Activated T-helper 1 cell treated with anti-CD3 and anti-CD28 coated beads, Interleukin-12 subunit alpha, Interleukin-12 subunit beta, Interleukin-2, Interleukin-4 antibody, amounts not matched to agents 30 ng/mL and 10 ng/mL and 1 ng/mL, durations not matched to agents 14 hours and 24 hours and 36 hours (primary cell): ENCODE measurements at regions of chr12 and their contacts with region 1.

Region 1: DNA sequence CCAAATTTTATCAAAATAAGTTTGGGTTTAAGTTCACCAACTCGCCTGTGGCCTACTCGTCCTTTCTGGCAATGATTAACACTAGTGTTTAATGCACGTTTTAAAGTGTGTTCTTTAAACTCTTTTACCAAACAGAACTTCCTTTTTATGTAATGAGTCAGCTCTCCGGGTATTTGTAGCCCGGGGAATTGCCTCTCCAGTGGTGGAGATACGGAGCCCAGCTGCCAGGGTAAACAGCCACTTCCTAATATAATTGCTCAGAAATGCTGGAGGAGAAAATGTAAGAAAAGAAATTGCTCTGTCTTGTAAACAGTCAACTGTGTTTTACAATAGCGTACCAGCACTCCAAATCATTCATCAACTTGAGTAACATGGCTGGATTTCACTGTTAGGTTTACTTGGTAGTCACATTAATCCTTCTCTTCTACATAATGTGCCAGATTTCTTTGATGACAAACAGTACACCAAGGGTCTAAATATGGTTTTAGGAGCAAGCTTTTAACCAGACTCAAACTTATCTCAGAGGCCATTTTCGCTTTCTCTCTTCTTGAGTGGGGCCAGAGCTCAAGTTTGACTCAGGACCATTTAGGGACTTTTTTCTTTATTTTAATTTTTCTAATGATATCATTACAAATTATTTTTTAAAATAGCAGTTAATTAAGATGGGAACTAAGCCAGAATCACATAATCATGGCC is 101.2 kb upstream of the SLC38A2 start:
- DNase-seq: no peak
- H3K4me3 Mint-ChIP-seq: peak overlapping the region; percentile 51
- H3K27ac Mint-ChIP-seq: peak overlapping the region; percentile 65
- H3K4me1 Mint-ChIP-seq: peaks cover 42% of the 10 kb centered on the region
- H3K27me3 Mint-ChIP-seq: no peaks in the 10 kb centered on the region

Region 2: DNA sequence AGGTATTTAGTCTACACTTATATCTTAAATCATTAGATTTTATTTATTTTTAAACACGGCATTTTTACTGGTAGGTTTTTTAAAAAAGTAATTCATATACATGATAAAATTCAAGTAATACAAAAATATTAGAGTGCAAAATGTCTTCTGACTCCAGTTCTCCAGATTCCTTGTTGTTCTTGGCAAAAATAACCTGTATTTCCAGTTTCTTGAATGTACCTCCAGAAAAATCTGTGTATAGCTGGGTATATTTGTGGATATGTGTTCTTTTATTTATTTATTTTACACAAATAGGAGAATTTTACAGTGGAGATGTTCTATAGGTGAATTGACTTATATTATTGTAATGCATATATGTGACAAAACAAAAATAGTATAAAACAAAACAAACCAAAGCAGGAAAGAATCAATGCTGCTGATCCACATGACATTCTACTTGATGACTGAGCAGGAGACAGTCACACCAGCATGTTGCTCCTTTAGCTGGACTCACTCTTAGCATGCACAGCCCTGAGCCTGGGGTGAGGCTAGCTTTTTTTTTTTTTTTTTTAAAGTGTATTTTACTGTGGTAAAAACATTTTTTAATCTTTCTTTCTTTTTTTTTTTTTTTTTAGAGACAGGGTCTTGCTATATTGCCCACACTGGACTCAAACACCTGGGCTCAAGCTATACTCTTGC is 59.1 kb before region 1 on chr12:
- intact Hi-C with region 1: no loop called
- DNase-seq: no peak
- H3K4me3 Mint-ChIP-seq: no peak overlapping the region
- H3K27ac Mint-ChIP-seq: no peak overlapping the region
- H3K4me1 Mint-ChIP-seq: no peaks in the 10 kb centered on the region
- H3K27me3 Mint-ChIP-seq: no peaks in the 10 kb centered on the region

Region 3: GRCh38 chr12:46503637-46504175 is 29.9 kb after region 1 on chr12:
- intact Hi-C with region 1: loop called (anchors 1 kb)
- DNase-seq: no peak
- H3K4me3 Mint-ChIP-seq: no peak overlapping the region
- H3K27ac Mint-ChIP-seq: no peak overlapping the region
- H3K4me1 Mint-ChIP-seq: peaks cover 9% of the 10 kb centered on the region
- H3K27me3 Mint-ChIP-seq: no peaks in the 10 kb centered on the region

Region 4: DNA sequence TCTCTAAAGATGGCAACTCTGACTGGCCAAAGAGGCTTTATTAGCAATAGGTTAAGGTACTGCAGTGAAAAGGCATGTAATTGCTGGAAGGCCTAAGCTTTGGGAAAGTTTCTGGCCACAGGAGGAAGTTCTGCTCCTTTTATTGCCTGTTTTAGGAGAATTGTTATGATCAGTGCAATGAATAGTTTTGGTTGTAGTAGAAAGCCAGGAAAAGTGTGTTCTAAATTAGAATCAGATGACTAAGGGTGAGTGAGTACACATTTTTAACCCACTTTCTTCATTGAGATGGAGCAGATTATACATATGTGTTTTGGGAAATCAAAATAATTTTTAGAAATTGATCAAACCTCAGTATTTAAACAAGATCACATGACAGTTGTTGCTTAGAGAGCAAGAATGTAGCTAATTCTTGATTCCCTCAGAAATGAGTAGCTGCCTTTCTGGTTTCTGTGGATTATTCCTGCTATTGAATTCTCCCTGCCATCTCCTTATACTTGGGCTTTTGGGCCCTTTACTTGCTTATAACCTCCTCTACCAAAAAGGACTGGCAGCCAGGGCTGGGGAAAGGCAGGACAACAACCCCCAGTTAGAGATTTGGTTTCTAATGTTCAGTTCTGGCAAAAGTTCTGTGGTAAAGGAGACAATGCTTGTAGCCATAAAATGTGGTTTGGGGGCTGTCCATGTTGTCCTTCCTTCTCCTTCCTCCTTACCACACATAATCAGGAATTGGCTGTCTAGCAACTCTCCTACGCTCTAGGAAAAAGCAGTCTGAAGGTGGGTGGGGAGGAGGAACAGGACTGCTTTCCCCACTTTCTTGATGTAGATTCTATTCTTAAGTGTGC is 134.9 kb after region 1 on chr12:
- intact Hi-C with region 1: loop called (anchors 5 kb)
- DNase-seq: no peak
- H3K4me3 Mint-ChIP-seq: peak overlapping the region; percentile 71
- H3K27ac Mint-ChIP-seq: peak overlapping the region; percentile 42
- H3K4me1 Mint-ChIP-seq: peaks cover 29% of the 10 kb centered on the region
- H3K27me3 Mint-ChIP-seq: no peaks in the 10 kb centered on the region